ENCODE measurements at regions of chr6 and their contacts with region 1.

Region 1: DNA sequence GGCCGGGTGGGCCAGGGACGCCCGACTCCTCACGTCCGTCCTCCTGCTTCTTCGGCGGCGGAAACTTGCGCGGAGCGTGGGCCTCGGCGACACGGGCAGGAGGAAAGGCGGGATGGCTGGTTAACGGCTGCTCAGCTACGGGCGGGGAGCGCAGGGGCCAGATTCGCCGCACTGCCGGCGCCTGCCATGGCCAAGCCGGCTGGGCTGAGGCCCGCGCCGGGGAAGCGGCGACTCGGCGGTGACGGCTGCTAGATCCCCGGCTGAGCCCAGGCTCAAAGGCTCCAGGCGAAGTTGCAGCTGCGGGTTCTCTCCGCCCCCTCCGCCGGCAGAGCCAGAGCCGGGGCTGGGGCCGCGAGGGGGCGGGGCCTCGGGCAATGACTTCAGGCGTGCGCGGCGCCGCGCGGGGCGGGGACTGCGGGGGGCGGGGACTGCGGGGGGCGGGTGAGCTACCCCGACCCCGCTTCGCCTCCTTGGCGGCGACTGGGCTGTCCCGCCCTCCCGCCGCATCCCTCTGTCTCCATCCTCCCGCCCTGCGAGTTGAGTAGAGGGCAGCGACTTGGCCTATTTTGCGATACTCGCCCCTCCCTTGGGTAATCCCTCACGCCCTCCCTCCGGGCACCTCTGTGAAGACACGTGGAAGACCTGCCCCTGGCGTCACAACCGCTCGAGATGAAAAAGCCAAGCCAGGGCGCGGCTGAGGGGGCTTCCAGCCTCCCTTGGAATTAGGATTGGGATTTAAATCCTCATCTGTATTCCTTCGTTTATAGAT is at the start of gene CEP85L:
- DNase-seq: peak; percentile 95
- H3K4me3 ChIP-seq: peak within 1 kb of the TSS; percentile 76 to 90 (median 84)
- H3K27ac ChIP-seq: peak within 1 kb of the TSS; percentile 93 to 99 (median 96)
- H3K4me1 ChIP-seq: peaks cover 0 to 17% (median 13%) of the 10 kb centered on the region in 4 donors
- H3K27me3 ChIP-seq: no peaks in the 10 kb centered on the region
- CTCF ChIP-seq: peak in 2 of 4 experiments; percentile 1 to 60
- EP300 ChIP-seq: no peak
- POLR2A ChIP-seq: peak; percentile 58 to 68
- total RNA-seq, gene CEP85L: 12.8 to 17.4 (median 15.6) TPM

Region 2: DNA sequence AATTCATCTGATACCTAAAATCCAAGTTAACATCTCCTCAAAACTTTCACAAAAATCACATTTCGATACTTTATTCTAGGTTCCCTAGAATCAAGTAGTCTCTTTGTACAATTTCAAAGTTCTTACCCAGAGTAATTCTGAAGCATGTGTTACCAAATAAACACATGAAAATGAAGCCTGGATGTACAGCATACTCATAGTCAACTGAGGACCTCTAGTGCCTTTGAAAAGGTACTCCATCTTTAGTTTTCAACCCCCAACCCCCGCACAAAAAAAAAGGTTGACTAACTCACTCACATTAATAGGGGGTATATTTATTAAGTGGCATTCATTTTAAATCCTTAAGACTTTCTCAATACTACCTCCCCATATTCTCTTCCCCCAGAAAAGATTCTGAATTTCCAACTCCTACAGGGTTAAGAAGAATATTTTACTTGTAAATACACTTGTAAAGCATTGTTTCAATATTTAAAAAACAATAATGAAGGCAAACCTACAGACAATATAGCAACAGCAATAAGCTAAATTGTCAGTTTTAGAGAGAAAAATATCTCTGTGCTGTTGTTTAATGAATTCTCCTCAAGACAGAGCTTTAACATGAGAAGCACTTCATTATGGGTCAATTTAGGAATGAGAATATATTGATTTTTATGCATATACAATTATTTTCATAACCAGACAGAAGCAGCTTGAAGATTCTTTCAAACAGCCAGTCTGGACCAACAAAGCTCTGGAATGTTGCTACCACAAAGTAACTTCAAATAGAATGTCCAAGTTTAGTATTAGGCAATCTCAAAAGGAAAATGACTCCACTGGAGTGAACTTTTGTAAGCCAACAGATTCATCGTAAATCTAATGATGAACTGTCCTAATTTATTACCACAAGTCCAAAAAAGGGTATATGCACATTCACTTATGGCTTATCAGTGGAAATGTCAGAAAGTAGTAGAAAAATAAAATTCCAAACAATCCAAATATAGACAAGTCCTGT is 100.1 kb before region 1 on chr6:
- intact Hi-C with region 1: loop called (anchors 10 kb)
- DNase-seq: no peak
- H3K4me3 ChIP-seq: peak overlapping the region in 3 of 4 donors; percentile 42 to 59 (median 55)
- H3K27ac ChIP-seq: peak overlapping the region; percentile 58 to 84 (median 78)
- H3K4me1 ChIP-seq: peaks cover 0 to 55% (median 38%) of the 10 kb centered on the region in 4 donors
- H3K27me3 ChIP-seq: no peaks in the 10 kb centered on the region
- CTCF ChIP-seq: peak in 3 of 4 experiments; percentile 49 to 62 (median 56)
- EP300 ChIP-seq: no peak
- POLR2A ChIP-seq: no peak

Region 3: GRCh38 chr6:118594877-118595276 is 56.6 kb before region 1 on chr6:
- intact Hi-C with region 1: no loop called
- DNase-seq: no peak
- H3K4me3 ChIP-seq: no peak overlapping the region
- H3K27ac ChIP-seq: no peak overlapping the region
- H3K4me1 ChIP-seq: peaks cover 0 to 11% (median 0%) of the 10 kb centered on the region in 4 donors
- H3K27me3 ChIP-seq: no peaks in the 10 kb centered on the region
- CTCF ChIP-seq: no peak
- EP300 ChIP-seq: no peak
- POLR2A ChIP-seq: no peak

Region 4: DNA sequence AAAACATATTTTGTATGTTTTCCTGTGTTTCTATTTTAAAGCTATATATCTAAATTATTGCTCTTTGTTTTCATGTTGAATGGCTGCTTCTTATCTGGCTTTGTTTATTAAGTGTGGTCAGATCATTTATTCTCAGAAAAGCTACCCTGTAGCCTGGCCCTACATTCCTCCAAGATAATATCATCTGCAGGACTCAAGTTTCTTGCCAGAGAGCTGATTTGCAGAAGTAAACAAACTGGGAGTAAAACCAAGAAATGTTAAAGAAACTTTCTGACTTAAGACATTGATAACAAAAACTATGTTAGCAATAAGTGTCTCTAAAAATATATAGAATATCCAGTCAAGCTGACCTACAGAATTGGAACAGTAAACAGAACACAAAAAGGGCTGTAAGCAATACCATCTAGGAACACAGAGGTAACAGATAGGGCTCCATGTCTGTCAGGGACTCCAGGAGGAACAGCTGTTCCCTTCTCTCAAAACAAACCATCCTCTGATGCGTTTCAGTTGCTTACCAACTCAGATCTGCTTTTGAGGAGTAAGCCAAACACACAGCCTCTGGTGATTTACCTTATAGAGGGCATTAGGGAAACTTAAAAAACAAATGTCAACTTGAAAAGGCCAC is 17.4 kb after region 1 on chr6:
- intact Hi-C with region 1: no loop called
- DNase-seq: no peak
- H3K4me3 ChIP-seq: no peak overlapping the region
- H3K27ac ChIP-seq: no peak overlapping the region
- H3K4me1 ChIP-seq: peaks cover 0 to 5% (median 0%) of the 10 kb centered on the region in 4 donors
- H3K27me3 ChIP-seq: no peaks in the 10 kb centered on the region
- CTCF ChIP-seq: no peak
- EP300 ChIP-seq: no peak
- POLR2A ChIP-seq: no peak

Region 5: GRCh38 chr6:118776607-118777549 is 125.4 kb after region 1 on chr6:
- intact Hi-C with region 1: loop called (anchors 10 kb)
- DNase-seq: no peak
- H3K4me3 ChIP-seq: no peak overlapping the region
- H3K27ac ChIP-seq: no peak overlapping the region
- H3K4me1 ChIP-seq: peaks cover 0 to 10% (median 6%) of the 10 kb centered on the region in 4 donors
- H3K27me3 ChIP-seq: no peaks in the 10 kb centered on the region
- CTCF ChIP-seq: peak in 3 of 4 experiments; percentile 41 to 65 (median 52)
- EP300 ChIP-seq: no peak
- POLR2A ChIP-seq: no peak

Region 6: GRCh38 chr6:118800394-118801071 is 149.1 kb after region 1 on chr6:
- intact Hi-C with region 1: loop called (anchors 10 kb)
- DNase-seq: peak; percentile 81
- H3K4me3 ChIP-seq: peak overlapping the region in 1 of 4 donors; percentile 2
- H3K27ac ChIP-seq: no peak overlapping the region
- H3K4me1 ChIP-seq: peaks cover 0 to 10% (median 8%) of the 10 kb centered on the region in 4 donors
- H3K27me3 ChIP-seq: no peaks in the 10 kb centered on the region
- CTCF ChIP-seq: peak; percentile 39 to 83 (median 72)
- EP300 ChIP-seq: no peak
- POLR2A ChIP-seq: no peak

Region 7: DNA sequence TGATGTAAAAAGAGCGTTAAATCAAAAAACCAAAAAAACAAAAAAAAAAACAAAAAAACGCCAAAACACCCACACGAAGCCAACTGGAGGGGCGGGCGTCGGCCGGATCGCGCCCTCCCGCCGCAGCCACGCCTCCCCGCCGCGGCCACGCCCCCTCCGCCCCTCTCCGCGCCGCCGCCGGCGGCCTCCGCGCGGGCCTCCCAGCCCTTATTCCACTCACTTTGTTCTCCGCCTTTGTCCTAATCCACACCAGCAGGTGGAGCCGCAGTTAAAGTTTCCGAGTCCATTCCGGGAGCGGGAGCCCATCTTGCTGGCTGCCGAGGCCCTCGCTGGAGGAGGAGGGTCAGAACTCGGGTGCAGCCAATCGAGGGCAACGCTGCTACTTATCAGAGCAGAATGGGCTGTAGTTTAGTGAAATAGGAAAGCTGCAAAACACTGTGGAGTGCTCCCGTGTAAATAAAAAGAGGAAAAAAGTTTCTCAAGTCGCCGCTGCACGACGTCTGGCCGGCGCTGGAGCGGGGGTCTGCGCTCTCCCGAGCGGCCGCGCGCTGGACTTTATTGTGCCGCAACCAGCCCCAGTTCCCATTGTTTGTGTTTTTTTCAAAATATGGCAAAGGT is 242.4 kb after region 1 on chr6 and contains the start of gene ASF1A:
- intact Hi-C with region 1: loop called (anchors 5 kb)
- DNase-seq: peak; percentile 98
- H3K4me3 ChIP-seq: peak within 1 kb of the TSS; percentile 68 to 96 (median 82)
- H3K27ac ChIP-seq: peak within 1 kb of the TSS; percentile 93 to 98 (median 96)
- H3K4me1 ChIP-seq: peaks cover 0 to 38% (median 17%) of the 10 kb centered on the region in 4 donors
- H3K27me3 ChIP-seq: no peaks in the 10 kb centered on the region
- CTCF ChIP-seq: peak in 3 of 4 experiments; percentile 22 to 46 (median 33)
- EP300 ChIP-seq: no peak
- POLR2A ChIP-seq: peak; percentile 60 to 63
- total RNA-seq, gene ASF1A: 10.2 to 17.1 (median 14.1) TPM